Motor neuron (in vitro differentiated cells): ENCODE measurements at regions of chr2 and their contacts with region 1.

Region 1: GRCh38 chr2:88669371-88670214 is 21.9 kb upstream of the RPIA start:
- ATAC-seq: peak in 7 of 8 experiments; percentile 48 to 77 (median 65)
- H3K4me3 ChIP-seq: no peak overlapping the region
- H3K27ac ChIP-seq: no peak overlapping the region
- H3K4me1 ChIP-seq: no peaks in the 10 kb centered on the region

Region 2: GRCh38 chr2:88590998-88591613 is 78.5 kb before region 1 on chr2:
- in situ Hi-C with region 1: loop called in 3 of 9 experiments (anchors 5 to 10 kb)
- ATAC-seq: peak in 7 of 8 experiments; percentile 38 to 79 (median 74)
- H3K4me3 ChIP-seq: no peak overlapping the region
- H3K27ac ChIP-seq: no peak overlapping the region
- H3K4me1 ChIP-seq: no peaks in the 10 kb centered on the region

Region 3: DNA sequence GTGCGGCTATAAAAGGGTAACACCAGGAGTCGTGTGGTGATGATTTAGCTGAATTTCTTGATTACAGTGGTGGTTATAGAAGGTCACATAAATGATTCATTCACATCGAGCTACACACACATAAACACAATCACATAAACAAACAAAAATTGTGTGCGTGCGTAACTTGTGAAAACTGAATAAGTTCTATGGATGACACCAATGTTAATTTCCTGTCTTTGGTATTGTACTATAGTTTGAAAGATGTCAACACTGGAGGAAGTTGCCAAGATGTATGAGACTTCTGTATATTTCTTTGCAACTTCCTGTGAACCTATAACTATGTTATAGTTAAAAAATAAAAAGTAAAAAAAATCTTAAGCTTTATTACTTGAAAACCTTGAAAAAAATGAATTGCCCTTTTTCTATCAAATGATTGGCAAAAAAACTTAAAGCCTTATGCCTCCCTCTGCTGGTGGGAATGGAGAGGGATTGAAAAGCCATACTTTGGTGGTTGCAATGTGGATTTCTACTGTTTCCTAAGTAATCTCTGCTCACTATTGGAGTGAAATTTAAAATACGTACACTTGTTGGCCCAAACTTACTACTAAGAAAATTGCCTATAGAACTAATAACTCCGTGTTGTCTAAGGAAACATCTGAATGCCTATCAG is 249.6 kb after region 1 on chr2:
- in situ Hi-C with region 1: no loop called
- ATAC-seq: peak in 1 of 8 experiments; percentile 62
- H3K4me3 ChIP-seq: no peak overlapping the region
- H3K27ac ChIP-seq: no peak overlapping the region
- H3K4me1 ChIP-seq: no peaks in the 10 kb centered on the region